Caco-2 (cell line): ENCODE measurements at regions of chr4 and their contacts with region 1.

Region 1: DNA sequence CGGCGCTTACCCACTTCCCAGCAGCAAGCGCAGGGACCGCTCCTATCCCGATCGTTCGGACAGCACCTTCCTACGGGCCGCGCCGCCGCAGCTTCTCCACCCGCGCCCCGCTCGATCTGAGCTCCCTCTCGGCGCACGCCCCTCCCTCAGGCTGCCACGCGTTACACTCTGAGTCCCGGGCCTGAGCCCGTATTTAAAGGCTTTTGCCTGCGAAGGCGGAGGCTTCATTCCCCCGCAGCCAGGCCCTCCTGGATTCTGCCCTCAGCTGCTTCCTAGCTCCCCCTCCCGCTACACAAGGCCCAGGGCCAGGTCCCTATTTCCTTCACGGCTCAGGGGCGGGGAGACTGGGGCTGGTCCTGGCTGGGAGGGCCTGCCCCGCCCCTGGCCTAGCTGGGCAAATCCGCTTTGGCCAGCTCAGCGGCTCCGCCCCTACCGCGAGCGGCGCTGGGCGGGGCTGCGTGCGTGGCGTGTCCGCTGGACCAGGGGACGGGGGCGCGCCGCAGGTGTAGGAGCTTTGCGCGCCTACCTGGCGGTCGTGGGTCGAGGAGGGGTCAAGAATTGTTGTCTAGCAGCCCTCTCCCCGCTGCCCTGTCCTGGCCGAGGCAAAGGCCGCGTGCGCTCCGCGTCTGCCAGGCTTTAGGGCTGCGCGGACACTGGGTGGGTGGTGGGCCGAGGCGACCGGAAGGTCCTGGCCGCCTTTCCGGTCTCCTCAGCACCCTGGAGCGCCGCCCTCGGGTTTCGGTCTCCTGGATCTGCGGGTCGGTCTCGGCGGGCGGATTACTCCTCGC is at the start of gene UGDH:
- DNase-seq: peak; percentile 98 to 99
- H3K4me3 ChIP-seq: peak within 1 kb of the TSS; percentile 76
- H3K4me3 Mint-ChIP-seq: peak within 1 kb of the TSS; percentile 98
- H3K27ac Mint-ChIP-seq: peak within 1 kb of the TSS; percentile 96
- H3K4me1 ChIP-seq: no peaks in the 10 kb centered on the region; the same call in 1 of the 2 replicates
- H3K4me1 Mint-ChIP-seq: no peaks in the 10 kb centered on the region
- H3K27me3 ChIP-seq: no peaks in the 10 kb centered on the region
- H3K27me3 Mint-ChIP-seq: no peaks in the 10 kb centered on the region
- CTCF ChIP-seq: no peak
- total RNA-seq, gene UGDH: 139 and 140 TPM in 2 replicates

Region 2: DNA sequence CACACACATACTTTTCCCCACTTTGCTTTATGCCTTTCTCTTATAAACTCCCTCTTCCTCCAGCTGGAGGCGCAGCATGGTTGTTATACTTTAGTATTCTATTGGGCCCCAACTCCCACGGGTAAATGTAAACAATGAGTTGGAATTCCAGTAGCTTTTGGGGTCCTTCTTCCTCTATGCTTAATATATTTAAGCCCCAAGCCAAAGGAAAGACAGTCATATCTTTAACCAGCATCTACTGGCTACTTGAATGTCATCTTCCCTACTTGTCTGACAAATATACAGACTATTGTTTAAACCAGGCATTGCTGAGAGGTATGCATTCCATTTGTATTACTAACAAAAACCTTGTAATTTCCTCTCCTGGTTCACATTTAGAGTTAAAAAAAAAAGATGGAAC is 272.2 kb before region 1 on chr4:
- CTCF ChIA-PET with region 1: no interaction called
- POLR2A ChIA-PET with region 1: no interaction called
- intact Hi-C with region 1: no loop called
- DNase-seq: no peak
- H3K4me3 ChIP-seq: no peak overlapping the region
- H3K4me3 Mint-ChIP-seq: no peak overlapping the region
- H3K27ac Mint-ChIP-seq: no peak overlapping the region
- H3K4me1 ChIP-seq: no peaks in the 10 kb centered on the region; the same call in 1 of the 2 replicates
- H3K4me1 Mint-ChIP-seq: no peaks in the 10 kb centered on the region
- H3K27me3 ChIP-seq: no peaks in the 10 kb centered on the region
- H3K27me3 Mint-ChIP-seq: no peaks in the 10 kb centered on the region
- CTCF ChIP-seq: no peak

Region 3: DNA sequence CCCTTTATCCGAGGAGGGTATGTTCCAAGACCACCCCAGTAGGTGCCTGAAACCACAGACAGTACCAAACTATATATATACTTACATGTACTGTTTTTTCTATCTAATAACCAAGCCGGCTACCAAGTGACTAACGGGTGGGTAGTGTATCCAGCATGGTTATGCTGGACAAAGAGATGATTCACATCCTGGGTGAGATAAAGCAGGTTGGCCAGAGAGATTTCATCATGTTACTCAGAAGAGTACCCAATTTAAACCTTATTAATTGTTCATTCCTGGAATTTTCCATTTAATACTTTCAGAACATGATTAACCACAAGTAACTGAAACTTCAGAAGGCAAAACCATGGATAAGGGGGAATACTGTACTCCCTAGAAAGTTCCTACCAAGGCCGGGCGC is 207.8 kb before region 1 on chr4:
- CTCF ChIA-PET with region 1: no interaction called
- POLR2A ChIA-PET with region 1: no interaction called
- intact Hi-C with region 1: no loop called
- DNase-seq: no peak
- H3K4me3 ChIP-seq: no peak overlapping the region
- H3K4me3 Mint-ChIP-seq: no peak overlapping the region
- H3K27ac Mint-ChIP-seq: no peak overlapping the region
- H3K4me1 ChIP-seq: peaks cover 37% of the 10 kb centered on the region
- H3K4me1 Mint-ChIP-seq: peaks cover 12% of the 10 kb centered on the region
- H3K27me3 ChIP-seq: no peaks in the 10 kb centered on the region
- H3K27me3 Mint-ChIP-seq: no peaks in the 10 kb centered on the region
- CTCF ChIP-seq: no peak

Region 4: DNA sequence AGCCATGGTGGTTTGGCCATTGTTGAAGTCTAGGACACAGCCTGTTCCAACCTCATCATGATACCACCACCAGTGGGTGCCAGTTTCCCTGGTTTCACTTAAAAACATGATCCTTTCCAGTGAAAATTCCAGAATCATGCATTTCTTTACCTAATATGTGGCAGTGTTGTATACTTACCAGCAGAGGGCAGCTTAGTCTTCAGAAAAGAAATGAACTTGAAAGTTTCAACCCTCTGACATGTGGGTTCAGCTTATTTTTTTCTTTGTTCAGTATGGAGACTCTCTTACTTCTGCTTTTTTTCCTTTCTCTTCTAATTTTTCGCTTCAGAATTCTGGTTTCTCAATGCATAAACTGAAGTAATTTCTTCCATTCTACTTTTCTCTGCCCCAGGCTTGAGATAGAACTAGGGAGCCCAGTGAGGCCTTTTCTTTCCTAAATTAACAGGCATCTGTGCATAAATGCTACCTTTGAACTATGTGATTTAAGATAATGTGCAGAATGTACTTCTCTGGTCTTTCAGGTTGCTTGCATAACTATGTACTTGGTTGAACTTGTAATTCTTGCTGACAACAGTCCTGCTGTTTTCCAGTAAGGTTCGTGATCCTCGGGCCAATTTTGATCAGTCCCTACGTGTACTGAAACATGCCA is 57.9 kb before region 1 on chr4:
- CTCF ChIA-PET with region 1: interaction called, 4 read pairs
- POLR2A ChIA-PET with region 1: interaction called, 5 read pairs
- intact Hi-C with region 1: loop called (anchors 2 kb)
- DNase-seq: peak; percentile 76
- H3K4me3 ChIP-seq: no peak overlapping the region
- H3K4me3 Mint-ChIP-seq: no peak overlapping the region
- H3K27ac Mint-ChIP-seq: peak overlapping the region; percentile 54
- H3K4me1 ChIP-seq: peaks cover 6% of the 10 kb centered on the region
- H3K4me1 Mint-ChIP-seq: no peaks in the 10 kb centered on the region
- H3K27me3 ChIP-seq: no peaks in the 10 kb centered on the region
- H3K27me3 Mint-ChIP-seq: no peaks in the 10 kb centered on the region
- CTCF ChIP-seq: peak; percentile 84 to 86

Region 5: GRCh38 chr4:39495454-39496213 is 31.8 kb before region 1 on chr4:
- CTCF ChIA-PET with region 1: no interaction called
- POLR2A ChIA-PET with region 1: no interaction called
- intact Hi-C with region 1: no loop called
- DNase-seq: no peak
- H3K4me3 ChIP-seq: no peak overlapping the region
- H3K4me3 Mint-ChIP-seq: no peak overlapping the region
- H3K27ac Mint-ChIP-seq: no peak overlapping the region
- H3K4me1 ChIP-seq: peaks cover 9% of the 10 kb centered on the region
- H3K4me1 Mint-ChIP-seq: no peaks in the 10 kb centered on the region
- H3K27me3 ChIP-seq: no peaks in the 10 kb centered on the region
- H3K27me3 Mint-ChIP-seq: no peaks in the 10 kb centered on the region
- CTCF ChIP-seq: no peak

Region 6: DNA sequence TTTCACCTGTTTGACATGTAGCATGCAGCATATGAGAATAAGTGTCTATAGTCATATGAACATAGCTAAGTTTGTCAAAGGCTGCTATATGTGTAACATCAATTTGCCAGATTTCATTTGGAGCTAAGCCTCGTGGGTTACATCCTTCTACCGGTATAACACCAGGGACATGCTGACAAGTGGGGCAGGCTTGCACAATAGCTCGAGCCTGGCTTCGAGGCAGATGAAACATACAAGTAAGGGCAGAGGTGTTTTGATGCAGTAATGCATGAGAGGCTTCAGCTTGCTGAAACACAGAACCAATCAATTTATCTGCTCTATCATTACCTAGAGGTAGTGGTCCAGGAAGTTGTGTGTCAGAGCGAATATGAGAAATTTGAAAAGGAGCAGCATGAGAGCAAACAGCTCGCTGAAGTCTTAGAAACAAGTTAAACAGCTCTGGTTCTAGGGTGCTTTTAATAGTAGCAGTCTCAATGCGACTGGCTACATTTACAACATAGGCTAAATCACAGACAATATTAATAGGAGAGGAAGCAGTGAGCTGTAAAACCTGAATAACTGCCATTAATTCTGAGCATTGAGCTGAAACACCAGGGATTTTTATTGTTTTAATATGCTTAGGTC is 14.6 kb after region 1 on chr4:
- CTCF ChIA-PET with region 1: no interaction called
- POLR2A ChIA-PET with region 1: interaction called, 12 read pairs
- intact Hi-C with region 1: no loop called
- DNase-seq: no peak
- H3K4me3 ChIP-seq: no peak overlapping the region
- H3K4me3 Mint-ChIP-seq: no peak overlapping the region
- H3K27ac Mint-ChIP-seq: no peak overlapping the region
- H3K4me1 ChIP-seq: 0 out of 2 replicates have a peak, but pooled peaks cover 12% of the 10 kb centered on the region
- H3K4me1 Mint-ChIP-seq: peaks cover 15% of the 10 kb centered on the region
- H3K27me3 ChIP-seq: no peaks in the 10 kb centered on the region
- H3K27me3 Mint-ChIP-seq: no peaks in the 10 kb centered on the region
- CTCF ChIP-seq: no peak

Region 7: DNA sequence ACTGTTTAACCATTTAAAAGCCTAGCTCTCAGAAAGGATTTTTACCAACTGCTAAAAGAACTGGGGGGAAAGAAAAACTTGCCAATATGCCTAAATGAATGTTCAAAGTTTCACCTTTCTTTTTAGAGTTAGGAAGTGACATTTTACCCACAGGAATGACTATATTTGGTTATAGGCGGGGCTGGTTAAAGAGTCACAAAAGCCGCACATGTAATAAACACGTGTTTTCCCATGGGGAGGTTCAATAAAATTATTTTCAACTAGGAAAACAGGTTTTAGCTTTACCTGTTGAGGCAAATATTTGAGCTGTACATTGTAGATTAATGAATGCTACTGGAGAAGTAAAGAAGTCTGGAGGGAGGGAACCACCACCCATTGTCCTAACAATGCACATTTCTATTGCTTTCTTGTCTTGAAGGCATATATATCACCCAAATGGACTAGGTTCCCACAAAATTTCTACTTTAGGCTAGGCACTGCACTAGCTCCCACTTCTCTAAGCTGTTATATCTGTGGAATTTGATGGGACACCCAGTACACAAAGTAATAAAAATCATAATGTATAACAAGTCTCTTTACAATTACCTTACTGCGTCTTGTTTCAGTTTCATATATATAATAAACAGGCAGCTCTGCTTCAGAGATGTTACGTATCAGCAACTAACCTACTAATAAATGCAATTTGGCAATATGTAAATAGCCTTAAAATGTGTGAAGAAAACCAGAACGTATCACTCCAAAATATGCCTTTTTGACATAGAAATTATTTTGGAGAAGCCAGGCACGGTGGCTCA is 41.5 kb after region 1 on chr4:
- CTCF ChIA-PET with region 1: interaction called, 3 read pairs
- POLR2A ChIA-PET with region 1: interaction called, 10 read pairs
- intact Hi-C with region 1: no loop called
- DNase-seq: peak in 1 of 2 experiments; percentile 32
- H3K4me3 ChIP-seq: no peak overlapping the region
- H3K4me3 Mint-ChIP-seq: peak overlapping the region; percentile 22
- H3K27ac Mint-ChIP-seq: peak overlapping the region; percentile 74
- H3K4me1 ChIP-seq: peaks cover 8% of the 10 kb centered on the region
- H3K4me1 Mint-ChIP-seq: peaks cover 13% of the 10 kb centered on the region
- H3K27me3 ChIP-seq: no peaks in the 10 kb centered on the region
- H3K27me3 Mint-ChIP-seq: no peaks in the 10 kb centered on the region
- CTCF ChIP-seq: no peak

Region 8: GRCh38 chr4:39621582-39621981 is 94.1 kb after region 1 on chr4:
- CTCF ChIA-PET with region 1: no interaction called
- POLR2A ChIA-PET with region 1: no interaction called
- intact Hi-C with region 1: loop called (anchors 5 kb)
- DNase-seq: peak in 1 of 2 experiments; percentile 73
- H3K4me3 ChIP-seq: no peak overlapping the region
- H3K4me3 Mint-ChIP-seq: no peak overlapping the region
- H3K27ac Mint-ChIP-seq: peak overlapping the region; percentile 45
- H3K4me1 ChIP-seq: peaks cover 42% of the 10 kb centered on the region
- H3K4me1 Mint-ChIP-seq: peaks cover 9% of the 10 kb centered on the region
- H3K27me3 ChIP-seq: no peaks in the 10 kb centered on the region
- H3K27me3 Mint-ChIP-seq: no peaks in the 10 kb centered on the region
- CTCF ChIP-seq: no peak

Region 9: DNA sequence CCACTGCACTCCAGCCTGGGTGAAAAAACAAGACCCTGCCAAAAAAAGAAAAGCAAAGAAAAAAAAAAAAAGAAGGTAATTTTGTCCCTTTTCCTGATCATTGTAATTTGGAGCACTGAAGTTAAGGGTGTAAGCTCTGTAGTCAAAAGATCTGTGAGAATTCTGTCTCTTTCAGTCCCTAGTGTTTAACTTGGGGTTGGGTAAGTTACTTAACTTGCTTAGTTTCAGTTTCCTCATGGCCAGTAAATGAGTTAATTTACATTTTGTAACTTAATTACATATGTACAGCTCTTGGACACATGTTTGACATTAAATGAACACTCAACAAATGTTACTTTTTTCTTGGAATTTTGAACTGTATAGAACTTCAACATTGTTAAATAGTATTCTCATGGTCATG is 159.5 kb after region 1 on chr4:
- CTCF ChIA-PET with region 1: no interaction called
- POLR2A ChIA-PET with region 1: no interaction called
- intact Hi-C with region 1: no loop called
- DNase-seq: no peak
- H3K4me3 ChIP-seq: no peak overlapping the region
- H3K4me3 Mint-ChIP-seq: no peak overlapping the region
- H3K27ac Mint-ChIP-seq: no peak overlapping the region
- H3K4me1 ChIP-seq: no peaks in the 10 kb centered on the region
- H3K4me1 Mint-ChIP-seq: no peaks in the 10 kb centered on the region
- H3K27me3 ChIP-seq: no peaks in the 10 kb centered on the region
- H3K27me3 Mint-ChIP-seq: no peaks in the 10 kb centered on the region
- CTCF ChIP-seq: no peak

Region 10: DNA sequence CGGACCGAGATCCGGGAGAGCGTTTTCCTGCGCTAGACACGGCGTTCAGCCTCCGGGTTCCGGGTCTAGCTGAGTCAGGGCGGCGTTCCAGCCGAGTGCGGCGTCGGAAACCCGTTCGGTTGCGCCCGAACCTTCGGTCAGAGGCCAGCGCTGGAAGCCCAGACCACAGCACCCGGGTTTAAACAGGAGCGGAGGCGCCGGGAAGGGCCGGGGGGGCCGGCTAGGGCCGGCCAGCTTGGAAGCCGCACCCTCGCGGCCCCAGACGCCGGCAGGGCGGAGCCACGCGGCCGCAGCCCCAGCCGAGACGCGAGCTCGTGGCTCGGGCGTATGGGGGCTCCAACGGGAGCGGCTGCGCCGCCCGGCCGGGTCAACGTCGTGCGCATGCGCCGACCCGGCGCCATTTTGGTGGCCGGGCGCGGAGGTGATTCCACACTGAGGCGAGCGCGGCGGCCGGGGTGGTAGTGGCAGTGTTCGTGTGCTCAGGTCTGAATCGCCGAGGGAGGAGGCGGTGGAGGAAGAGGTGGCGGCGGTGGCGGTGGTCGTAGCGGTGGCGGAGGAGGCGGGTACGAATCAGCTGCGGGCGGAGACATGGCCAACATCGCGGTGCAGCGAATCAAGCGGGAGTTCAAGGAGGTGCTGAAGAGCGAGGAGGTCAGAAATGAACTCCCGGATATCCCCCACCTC is 170.4 kb after region 1 on chr4 and contains the start of gene UBE2K:
- CTCF ChIA-PET with region 1: interaction called, 3 read pairs
- POLR2A ChIA-PET with region 1: interaction called, 13 read pairs
- intact Hi-C with region 1: loop called (anchors 1 kb)
- DNase-seq: peak; percentile 91 to 94
- H3K4me3 ChIP-seq: peak within 1 kb of the TSS; percentile 79
- H3K4me3 Mint-ChIP-seq: peak within 1 kb of the TSS; percentile 88
- H3K27ac Mint-ChIP-seq: peak within 1 kb of the TSS; percentile 92
- H3K4me1 ChIP-seq: peaks cover 20% of the 10 kb centered on the region
- H3K4me1 Mint-ChIP-seq: peaks cover 18% of the 10 kb centered on the region
- H3K27me3 ChIP-seq: no peaks in the 10 kb centered on the region
- H3K27me3 Mint-ChIP-seq: no peaks in the 10 kb centered on the region
- CTCF ChIP-seq: no peak
- total RNA-seq, gene UBE2K: 141 and 144 TPM in 2 replicates